Activated T-helper 1 cell treated with anti-CD3 and anti-CD28 coated beads, Interleukin-12 subunit alpha, Interleukin-12 subunit beta, Interleukin-2, Interleukin-4 antibody, amounts not matched to agents 30 ng/mL and 10 ng/mL and 1 ng/mL, durations not matched to agents 14 hours and 24 hours and 36 hours (primary cell): ENCODE measurements at regions of chr19 and their contacts with region 1.

Region 1: GRCh38 chr19:2602391-2603181 is 99.9 kb downstream of the GNG7 start:
- DNase-seq: no peak
- H3K4me3 Mint-ChIP-seq: no peak overlapping the region
- H3K27ac Mint-ChIP-seq: no peak overlapping the region
- H3K4me1 Mint-ChIP-seq: peaks cover 13% of the 10 kb centered on the region
- H3K27me3 Mint-ChIP-seq: peaks cover 9% of the 10 kb centered on the region

Region 2: GRCh38 chr19:2532252-2533071 is 70.1 kb before region 1 on chr19:
- intact Hi-C with region 1: loop called (anchors 2 kb)
- DNase-seq: no peak
- H3K4me3 Mint-ChIP-seq: no peak overlapping the region
- H3K27ac Mint-ChIP-seq: no peak overlapping the region
- H3K4me1 Mint-ChIP-seq: peaks cover 26% of the 10 kb centered on the region
- H3K27me3 Mint-ChIP-seq: no peaks in the 10 kb centered on the region

Region 3: DNA sequence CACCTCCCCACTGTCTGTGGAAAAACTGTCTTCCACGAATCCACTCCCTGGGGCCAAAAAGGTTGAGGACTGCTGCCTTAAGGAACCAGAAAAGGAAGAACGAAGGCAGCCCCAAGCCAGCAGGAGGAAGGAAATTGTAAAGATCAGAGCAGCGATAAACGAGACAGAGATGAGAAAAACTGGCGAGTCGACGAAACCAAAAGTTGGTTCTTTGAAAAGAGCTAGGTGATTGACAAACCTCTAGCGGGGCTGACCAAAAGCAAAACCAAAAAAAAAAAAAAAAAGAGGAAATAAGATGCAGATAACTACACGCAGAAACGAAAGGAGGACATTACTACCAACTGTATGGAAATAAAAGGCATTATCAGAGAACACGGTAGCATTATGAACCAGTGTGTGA is 49.7 kb before region 1 on chr19:
- intact Hi-C with region 1: loop called (anchors 1 kb)
- DNase-seq: peak; percentile 69
- H3K4me3 Mint-ChIP-seq: peak overlapping the region; percentile 7
- H3K27ac Mint-ChIP-seq: peak overlapping the region; percentile 74
- H3K4me1 Mint-ChIP-seq: peaks cover 16% of the 10 kb centered on the region
- H3K27me3 Mint-ChIP-seq: no peaks in the 10 kb centered on the region

Region 4: DNA sequence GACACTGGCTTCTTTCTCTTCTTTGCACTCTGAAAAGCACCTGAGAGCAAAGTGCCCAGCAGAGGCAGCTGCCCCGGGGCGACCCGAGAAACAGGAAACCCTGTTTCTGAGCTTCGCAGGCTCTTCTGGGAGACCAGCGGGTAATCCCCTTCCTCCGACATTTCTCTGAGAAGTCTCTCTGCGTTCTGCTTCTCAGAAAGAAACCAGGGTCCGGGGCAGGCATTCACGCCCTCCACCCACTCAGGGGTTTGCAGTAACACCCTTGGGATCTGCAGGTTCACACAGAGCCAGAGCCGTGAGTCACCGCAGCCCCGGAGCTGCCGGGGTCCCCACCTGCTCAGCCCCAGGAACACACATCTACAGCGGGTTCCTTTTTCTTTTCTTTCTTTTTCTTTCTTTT is 40.7 kb before region 1 on chr19:
- intact Hi-C with region 1: loop called (anchors 2 kb)
- DNase-seq: peak; percentile 75
- H3K4me3 Mint-ChIP-seq: peak overlapping the region; percentile 79
- H3K27ac Mint-ChIP-seq: peak overlapping the region; percentile 92
- H3K4me1 Mint-ChIP-seq: peaks cover 43% of the 10 kb centered on the region
- H3K27me3 Mint-ChIP-seq: no peaks in the 10 kb centered on the region

Region 5: DNA sequence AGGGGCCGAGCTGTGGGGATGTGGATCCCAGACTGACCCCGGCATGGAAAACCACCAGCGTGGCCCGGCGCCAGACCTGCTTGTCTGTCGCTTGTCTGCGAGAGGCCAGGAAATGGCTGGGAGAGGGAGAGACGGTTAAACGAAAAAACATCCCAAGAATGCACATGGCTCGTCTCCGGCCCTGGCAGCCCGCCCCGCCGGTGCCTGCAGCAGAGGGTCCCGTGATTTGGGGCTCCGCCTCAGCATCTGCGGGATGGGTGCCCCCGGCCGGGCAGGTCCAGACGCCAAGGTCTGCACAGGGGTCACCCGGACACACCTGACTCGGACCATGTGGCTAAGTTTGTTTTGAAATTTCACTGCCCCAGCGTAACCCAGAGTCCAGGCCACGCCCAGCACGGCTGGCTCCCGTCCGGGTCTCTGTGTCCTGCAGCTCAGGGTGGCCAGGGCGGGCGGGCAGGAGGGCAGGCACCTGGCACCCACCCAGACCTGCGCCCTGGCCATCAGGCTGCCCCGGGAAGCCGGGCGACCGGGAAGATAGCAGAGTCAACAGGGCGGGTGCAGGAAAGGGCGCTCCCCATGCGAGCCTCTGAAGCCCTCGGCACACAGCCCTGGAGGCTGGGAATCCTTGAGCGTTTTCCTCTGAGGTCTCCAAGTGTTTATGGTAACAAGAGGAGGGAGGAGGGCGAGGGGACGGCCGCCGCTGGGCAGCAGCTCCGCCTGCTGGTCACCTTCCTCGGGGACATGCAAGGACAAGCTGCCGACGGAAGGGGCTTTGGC is 23.5 kb before region 1 on chr19:
- intact Hi-C with region 1: loop called (anchors 2 kb)
- DNase-seq: peak; percentile 53
- H3K4me3 Mint-ChIP-seq: peak overlapping the region; percentile 33
- H3K27ac Mint-ChIP-seq: no peak overlapping the region
- H3K4me1 Mint-ChIP-seq: peaks cover 6% of the 10 kb centered on the region
- H3K27me3 Mint-ChIP-seq: peaks cover 5% of the 10 kb centered on the region

Region 6: DNA sequence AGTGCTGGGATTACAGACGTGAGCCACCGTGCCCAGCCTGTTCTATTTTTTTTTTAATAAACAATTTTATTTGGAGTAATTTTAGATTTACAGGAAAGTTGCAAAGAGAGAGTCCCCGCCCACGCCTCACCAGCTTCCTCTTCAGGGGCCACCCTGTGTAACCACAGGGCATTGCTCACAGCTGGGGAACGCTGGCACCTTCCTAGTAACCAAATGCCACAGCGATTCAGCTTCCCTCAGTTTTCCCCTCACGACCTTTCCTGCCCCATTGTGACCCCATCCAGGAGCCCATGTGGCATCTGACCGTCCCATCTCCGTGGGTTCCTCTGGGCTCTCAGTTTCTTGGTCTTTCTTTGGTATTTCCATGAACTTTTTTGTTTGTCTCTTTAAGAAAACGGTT is 16.0 kb after region 1 on chr19:
- intact Hi-C with region 1: loop called (anchors 1 kb)
- DNase-seq: peak; percentile 36
- H3K4me3 Mint-ChIP-seq: peak overlapping the region; percentile 63
- H3K27ac Mint-ChIP-seq: peak overlapping the region; percentile 96
- H3K4me1 Mint-ChIP-seq: peaks cover 64% of the 10 kb centered on the region
- H3K27me3 Mint-ChIP-seq: peaks cover 2% of the 10 kb centered on the region